Activated T-helper 1 cell treated with anti-CD3 and anti-CD28 coated beads, Interleukin-12 subunit alpha, Interleukin-12 subunit beta, Interleukin-2, Interleukin-4 antibody, amounts not matched to agents 30 ng/mL and 10 ng/mL and 1 ng/mL, durations not matched to agents 14 hours and 24 hours and 36 hours (primary cell): ENCODE measurements at regions of chr15 and their contacts with region 1.

Region 1: DNA sequence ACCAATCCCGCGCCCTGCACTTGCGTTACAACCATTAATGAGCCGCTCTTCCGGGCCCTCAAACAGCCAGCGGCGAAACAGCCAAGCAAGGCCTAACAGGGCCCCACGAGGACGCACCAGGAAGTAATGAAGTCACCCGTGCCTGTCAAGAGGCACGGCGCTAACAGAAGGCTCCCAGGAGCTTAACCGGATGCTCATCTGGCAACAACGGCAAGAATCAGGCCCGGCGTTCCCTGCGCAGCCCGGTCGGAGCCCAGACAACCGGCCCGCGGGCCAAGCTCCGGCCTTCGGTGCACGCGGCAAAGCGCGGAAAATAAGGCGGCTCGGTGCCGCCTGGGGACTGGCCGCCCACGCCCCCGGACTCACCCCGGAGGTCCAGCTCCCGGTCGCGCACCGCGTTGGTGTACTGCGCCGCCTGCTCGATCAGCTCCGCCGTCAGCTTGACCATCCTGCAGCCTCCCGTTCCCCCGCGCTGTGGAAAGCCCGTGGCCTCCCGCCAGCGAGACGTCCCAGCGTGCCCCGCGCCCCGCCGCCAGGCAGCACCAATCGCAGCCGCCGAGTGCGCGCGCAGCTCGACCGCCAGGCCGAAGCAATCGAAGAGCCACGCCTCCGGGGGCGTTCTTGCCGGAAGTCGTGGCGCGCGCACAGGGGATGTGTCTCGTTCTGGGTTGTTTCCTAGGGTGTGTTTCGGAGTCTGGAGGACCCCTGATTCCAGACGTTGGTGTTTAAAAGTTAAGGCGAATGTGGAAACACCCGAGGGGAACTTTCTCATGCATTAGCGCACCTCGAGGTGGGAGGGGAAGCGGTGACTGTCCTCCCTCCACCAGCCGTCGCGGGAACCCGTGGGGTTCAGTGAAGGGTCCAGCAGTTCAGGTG is at the start of gene SNRPA1:
- DNase-seq: peak; percentile 97
- H3K4me3 Mint-ChIP-seq: peak within 1 kb of the TSS; percentile 100
- H3K27ac Mint-ChIP-seq: peak within 1 kb of the TSS; percentile 100
- H3K4me1 Mint-ChIP-seq: peaks cover 45% of the 10 kb centered on the region
- H3K27me3 Mint-ChIP-seq: peaks cover 2% of the 10 kb centered on the region
- total RNA-seq, gene SNRPA1: 176 and 184 TPM in 2 replicates

Region 2: GRCh38 chr15:101277038-101277882 is 17.7 kb before region 1 on chr15 and contains the start of gene SELENOS:
- intact Hi-C with region 1: loop called (anchors 1 kb)
- DNase-seq: peak; percentile 88
- H3K4me3 Mint-ChIP-seq: peak within 1 kb of the TSS; percentile 98
- H3K27ac Mint-ChIP-seq: peak within 1 kb of the TSS; percentile 88
- H3K4me1 Mint-ChIP-seq: peaks cover 38% of the 10 kb centered on the region
- H3K27me3 Mint-ChIP-seq: no peaks in the 10 kb centered on the region
- total RNA-seq, gene SELENOS: 47.4 and 53.0 TPM in 2 replicates

Region 3: GRCh38 chr15:101307048-101307896 is 12.3 kb after region 1 on chr15:
- intact Hi-C with region 1: no loop called
- DNase-seq: no peak
- H3K4me3 Mint-ChIP-seq: no peak overlapping the region
- H3K27ac Mint-ChIP-seq: no peak overlapping the region
- H3K4me1 Mint-ChIP-seq: no peaks in the 10 kb centered on the region
- H3K27me3 Mint-ChIP-seq: no peaks in the 10 kb centered on the region

Region 4: GRCh38 chr15:101333401-101333800 is 38.4 kb after region 1 on chr15:
- intact Hi-C with region 1: loop called (anchors 1 kb)
- DNase-seq: no peak
- H3K4me3 Mint-ChIP-seq: no peak overlapping the region
- H3K27ac Mint-ChIP-seq: no peak overlapping the region
- H3K4me1 Mint-ChIP-seq: no peaks in the 10 kb centered on the region
- H3K27me3 Mint-ChIP-seq: peaks cover 7% of the 10 kb centered on the region

Region 5: DNA sequence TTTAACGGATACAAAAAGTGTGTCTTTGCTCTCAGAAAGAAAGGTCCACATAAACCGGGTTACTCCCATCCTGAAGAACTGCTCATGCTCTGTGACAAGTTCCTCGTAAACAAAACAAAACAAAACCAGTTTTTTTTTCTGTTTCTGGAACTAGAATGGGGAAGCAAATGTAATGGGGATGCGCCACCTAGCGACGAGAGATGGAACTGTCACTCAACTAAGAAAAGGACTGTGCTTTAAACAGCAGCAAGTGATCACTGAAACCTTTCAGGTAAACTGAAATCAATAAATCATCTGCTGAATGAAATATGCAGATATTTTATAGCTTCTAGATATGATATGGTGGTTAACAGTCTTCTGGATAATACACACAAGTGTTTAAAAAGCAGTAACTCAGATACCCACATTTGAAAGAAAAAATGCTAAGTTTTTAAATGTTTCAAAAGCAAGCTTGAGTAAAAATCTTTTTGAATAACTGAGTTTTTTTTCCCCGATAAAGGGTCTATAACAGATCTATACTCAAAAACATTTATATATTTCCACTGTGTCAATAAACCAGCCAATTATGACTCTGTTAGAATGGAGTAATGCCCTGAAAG is 346.3 kb after region 1 on chr15:
- intact Hi-C with region 1: loop called (anchors 1 kb)
- DNase-seq: peak; percentile 59
- H3K4me3 Mint-ChIP-seq: no peak overlapping the region
- H3K27ac Mint-ChIP-seq: peak overlapping the region; percentile 70
- H3K4me1 Mint-ChIP-seq: peaks cover 17% of the 10 kb centered on the region
- H3K27me3 Mint-ChIP-seq: no peaks in the 10 kb centered on the region

Region 6: GRCh38 chr15:101723874-101724674 is 429.1 kb after region 1 on chr15 and contains the start of gene TARS3:
- intact Hi-C with region 1: loop called (anchors 1 kb)
- DNase-seq: peak; percentile 83
- H3K4me3 Mint-ChIP-seq: peak within 1 kb of the TSS; percentile 88
- H3K27ac Mint-ChIP-seq: peak within 1 kb of the TSS; percentile 95
- H3K4me1 Mint-ChIP-seq: peaks cover 30% of the 10 kb centered on the region
- H3K27me3 Mint-ChIP-seq: peaks cover under 1% of the 10 kb centered on the region
- total RNA-seq, gene TARS3: 13.9 and 15.2 TPM in 2 replicates